Body of pancreas (tissue), 4 donors: ENCODE measurements at regions of chr1 and their contacts with region 1.

Region 1: DNA sequence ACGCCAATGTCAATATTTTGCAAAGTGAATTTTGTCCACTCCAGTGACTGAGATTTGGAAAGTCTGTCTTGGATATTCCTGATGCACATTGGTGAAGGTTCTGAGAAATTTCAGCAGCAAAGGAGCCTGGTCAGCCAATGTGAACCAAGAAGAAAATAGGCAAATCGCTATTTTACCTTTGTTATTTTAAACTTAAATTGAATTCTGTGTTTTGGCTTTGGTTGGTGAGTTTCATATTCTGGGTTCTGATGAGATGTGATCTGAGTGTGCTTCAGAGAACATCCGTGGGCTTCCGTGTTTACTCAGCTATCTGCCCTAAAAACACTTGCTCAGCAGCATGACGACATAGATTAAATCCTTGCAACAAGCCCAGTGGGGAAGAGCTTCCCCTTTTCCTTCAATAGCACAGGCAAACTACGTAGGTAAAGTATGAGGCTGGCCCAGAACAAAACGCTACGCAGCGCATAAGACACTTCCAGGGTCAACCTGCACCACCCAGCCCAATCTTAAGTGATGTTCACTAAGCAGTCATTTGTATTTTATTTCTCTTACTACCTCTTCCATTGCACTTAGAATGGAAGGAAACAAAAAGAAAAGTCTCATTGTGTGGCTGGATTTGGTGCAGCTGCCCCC is 176.4 kb upstream of the KAZN start:
- DNase-seq: peak in 1 of 4 donors; percentile 16
- ATAC-seq: no peak
- H3K4me3 ChIP-seq: no peak overlapping the region
- H3K27ac ChIP-seq: no peak overlapping the region
- H3K4me1 ChIP-seq: no peaks in the 10 kb centered on the region
- H3K27me3 ChIP-seq: no peaks in the 10 kb centered on the region
- CTCF ChIP-seq: no peak
- POLR2A ChIP-seq: no peak

Region 2: GRCh38 chr1:14538335-14538734 is 116.2 kb after region 1 on chr1:
- intact Hi-C with region 1: loop called (anchors 10 kb)
- DNase-seq: no peak
- ATAC-seq: no peak
- H3K4me3 ChIP-seq: no peak overlapping the region
- H3K27ac ChIP-seq: no peak overlapping the region
- H3K4me1 ChIP-seq: no peaks in the 10 kb centered on the region
- H3K27me3 ChIP-seq: no peaks in the 10 kb centered on the region
- CTCF ChIP-seq: no peak
- POLR2A ChIP-seq: no peak